ENCODE measurements at regions of chr19 and their contacts with region 1.

Region 1: DNA sequence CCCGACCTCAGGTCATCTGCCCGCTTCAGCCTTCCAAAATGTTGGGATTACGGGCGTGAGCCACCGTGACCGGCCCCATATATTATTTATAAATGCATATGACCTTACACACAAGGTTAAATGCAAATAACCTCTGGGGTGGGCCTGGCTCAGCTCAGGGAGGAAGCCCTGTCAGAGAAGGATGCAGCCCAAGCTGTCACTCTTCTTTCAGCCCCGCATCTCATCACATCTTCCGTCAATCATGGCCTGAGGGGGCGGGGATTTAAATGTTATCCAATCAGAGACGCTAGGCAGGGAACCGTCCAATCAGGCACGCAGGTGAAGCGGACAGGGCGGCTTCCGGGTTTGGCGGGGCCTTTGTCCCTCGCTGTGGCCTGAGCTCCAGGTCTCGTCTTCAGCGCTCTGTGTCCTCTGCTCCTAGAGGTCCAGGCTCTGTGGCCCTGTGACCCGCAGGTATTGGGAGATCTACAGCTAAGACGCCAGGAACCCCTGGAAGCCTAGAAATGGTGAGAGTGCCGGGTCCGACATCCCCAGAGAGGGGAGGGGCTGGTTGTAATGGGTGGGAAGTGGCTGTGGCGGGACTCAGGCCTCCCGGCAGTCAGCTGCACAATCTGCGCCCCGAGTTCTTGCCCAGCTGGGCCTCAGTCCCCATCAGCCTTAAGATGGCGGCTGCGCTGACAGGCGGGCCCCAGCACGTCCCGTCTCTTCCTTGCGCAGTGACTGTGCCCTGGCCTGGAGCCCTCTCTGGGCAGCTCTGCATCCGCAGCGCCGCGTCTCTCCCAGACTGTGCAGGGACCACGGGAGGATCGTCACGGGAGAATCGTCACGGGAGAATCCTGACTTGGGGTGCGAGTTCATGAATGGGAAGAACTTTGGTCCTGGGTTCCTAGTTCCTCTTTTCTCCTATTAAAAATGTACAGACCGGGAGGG is at the start of gene ZNF430:
- DNase-seq: peak; percentile 96
- H3K4me3 ChIP-seq: peak within 1 kb of the TSS; percentile 68 to 81 (median 69)
- H3K27ac ChIP-seq: peak within 1 kb of the TSS; percentile 85 to 91 (median 88)
- H3K4me1 ChIP-seq: peaks cover 0 to 14% (median 9%) of the 10 kb centered on the region in 4 donors
- H3K27me3 ChIP-seq: no peaks in the 10 kb centered on the region
- CTCF ChIP-seq: no peak
- EP300 ChIP-seq: no peak
- POLR2A ChIP-seq: peak; percentile 21 to 52
- total RNA-seq, gene ZNF430: 6.7 to 36.2 (median 13.6) TPM

Region 2: DNA sequence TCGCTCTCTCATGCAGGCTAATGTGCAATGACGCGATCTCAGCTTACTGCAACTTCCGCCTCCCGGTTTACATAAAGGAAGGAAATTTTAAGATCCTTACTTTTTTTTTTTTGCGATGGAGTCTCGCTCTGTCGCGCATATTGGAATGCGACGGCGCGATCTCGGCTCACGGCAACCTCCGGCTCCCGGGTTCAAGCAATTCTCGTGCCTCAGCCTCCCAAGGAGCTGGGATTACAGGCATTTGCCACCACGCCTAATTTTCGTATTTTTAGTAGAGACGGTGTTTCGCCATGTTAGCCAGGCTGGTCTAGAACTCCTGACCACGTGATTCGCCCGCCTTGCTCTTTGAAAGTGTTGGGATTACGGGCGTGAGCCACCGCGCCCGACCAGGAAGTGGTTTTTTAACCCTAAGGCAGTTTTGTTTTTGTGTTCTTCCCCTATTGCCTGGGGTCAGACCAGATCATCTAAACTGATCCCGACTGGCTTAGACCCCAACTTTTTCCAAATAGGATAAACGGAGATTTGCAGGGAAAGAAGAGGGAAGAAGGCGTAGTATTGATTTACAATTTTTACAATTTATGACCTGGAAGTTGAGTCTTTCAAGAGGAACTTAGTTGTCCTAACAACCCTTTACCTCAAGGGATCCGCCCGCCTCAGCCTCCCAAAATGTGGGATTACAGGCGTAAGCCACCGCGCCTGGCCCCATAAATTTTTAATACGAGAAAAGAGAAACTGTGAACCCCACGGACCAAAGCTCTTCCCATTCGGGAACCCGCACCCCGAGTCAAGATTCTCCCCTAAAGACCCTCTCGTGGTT is 597.0 kb before region 1 on chr19:
- intact Hi-C with region 1: loop called (anchors 10 kb)
- DNase-seq: peak; percentile 83
- H3K4me3 ChIP-seq: peak overlapping the region; percentile 57 to 69 (median 63)
- H3K27ac ChIP-seq: peak overlapping the region; percentile 84 to 90 (median 88)
- H3K4me1 ChIP-seq: peaks cover 0 to 13% (median 2%) of the 10 kb centered on the region in 4 donors
- H3K27me3 ChIP-seq: no peaks in the 10 kb centered on the region
- CTCF ChIP-seq: no peak
- EP300 ChIP-seq: no peak
- POLR2A ChIP-seq: no peak

Region 3: GRCh38 chr19:20565321-20566018 is 455.1 kb before region 1 on chr19 and contains the start of gene ZNF737:
- intact Hi-C with region 1: loop called (anchors 10 kb)
- DNase-seq: peak; percentile 98
- H3K4me3 ChIP-seq: peak within 1 kb of the TSS; percentile 55 to 83 (median 64)
- H3K27ac ChIP-seq: peak within 1 kb of the TSS; percentile 82 to 95 (median 88)
- H3K4me1 ChIP-seq: peaks cover 0 to 26% (median 14%) of the 10 kb centered on the region in 4 donors
- H3K27me3 ChIP-seq: no peaks in the 10 kb centered on the region
- CTCF ChIP-seq: peak in 3 of 4 experiments; percentile 18 to 42 (median 41)
- EP300 ChIP-seq: no peak
- POLR2A ChIP-seq: peak; percentile 50 to 73
- total RNA-seq, gene ZNF737: 9.5 to 17.7 (median 11.2) TPM

Region 4: DNA sequence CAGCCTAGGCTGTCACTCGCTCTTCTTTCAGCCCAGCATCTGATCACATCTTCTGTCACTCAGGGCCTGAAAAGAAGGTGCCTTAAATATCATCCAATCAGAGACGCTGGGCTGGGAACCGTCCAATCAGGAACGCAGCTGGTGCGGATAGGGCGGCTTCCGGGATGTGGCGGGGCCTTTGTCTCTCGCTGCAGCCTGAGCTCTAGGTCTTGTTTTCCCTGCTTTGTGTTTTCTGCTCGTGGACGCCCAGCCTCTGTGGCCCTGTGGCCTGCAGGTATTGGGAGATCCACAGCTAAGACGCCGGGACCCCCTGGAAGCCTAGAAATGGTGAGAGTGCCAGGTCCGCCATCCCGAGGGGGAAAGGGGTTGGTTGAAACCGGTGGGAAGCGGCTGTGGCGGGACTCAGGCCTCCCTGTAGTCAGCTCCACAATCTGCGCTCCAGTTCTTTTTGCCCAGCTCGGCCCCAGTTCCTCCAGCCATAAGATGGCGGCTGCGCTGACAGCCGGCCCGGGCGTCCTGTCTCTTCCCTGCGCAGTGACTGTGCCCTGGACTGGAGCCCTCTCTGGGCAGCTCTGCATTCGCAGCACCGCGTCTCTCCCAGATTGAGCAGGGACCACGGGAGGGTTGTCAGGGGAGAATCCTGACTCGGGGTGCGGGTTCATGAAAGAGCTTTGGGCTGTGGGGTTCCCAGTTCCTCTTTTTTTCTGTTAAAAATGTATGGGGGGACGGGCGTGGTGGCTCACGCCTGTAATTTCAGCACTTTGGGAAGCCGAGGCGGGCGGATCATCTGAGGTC is 97.3 kb before region 1 on chr19 and contains the start of gene ZNF85:
- intact Hi-C with region 1: loop called (anchors 5 kb)
- DNase-seq: peak; percentile 94
- H3K4me3 ChIP-seq: peak within 1 kb of the TSS; percentile 38 to 69 (median 62)
- H3K27ac ChIP-seq: peak within 1 kb of the TSS; percentile 81 to 92 (median 87)
- H3K4me1 ChIP-seq: peaks cover 0 to 7% (median 2%) of the 10 kb centered on the region in 4 donors
- H3K27me3 ChIP-seq: no peaks in the 10 kb centered on the region
- CTCF ChIP-seq: no peak
- EP300 ChIP-seq: no peak
- POLR2A ChIP-seq: no peak
- total RNA-seq, gene ZNF85: 3.6 to 6.1 (median 4.1) TPM

Region 5: GRCh38 chr19:20999731-21000352 is 20.7 kb before region 1 on chr19:
- intact Hi-C with region 1: no loop called
- DNase-seq: peak; percentile 91
- H3K4me3 ChIP-seq: peak overlapping the region; percentile 5 to 51 (median 44)
- H3K27ac ChIP-seq: no peak overlapping the region
- H3K4me1 ChIP-seq: peaks cover 0 to 5% (median 3%) of the 10 kb centered on the region in 4 donors
- H3K27me3 ChIP-seq: no peaks in the 10 kb centered on the region
- CTCF ChIP-seq: no peak
- EP300 ChIP-seq: no peak
- POLR2A ChIP-seq: no peak

Region 6: DNA sequence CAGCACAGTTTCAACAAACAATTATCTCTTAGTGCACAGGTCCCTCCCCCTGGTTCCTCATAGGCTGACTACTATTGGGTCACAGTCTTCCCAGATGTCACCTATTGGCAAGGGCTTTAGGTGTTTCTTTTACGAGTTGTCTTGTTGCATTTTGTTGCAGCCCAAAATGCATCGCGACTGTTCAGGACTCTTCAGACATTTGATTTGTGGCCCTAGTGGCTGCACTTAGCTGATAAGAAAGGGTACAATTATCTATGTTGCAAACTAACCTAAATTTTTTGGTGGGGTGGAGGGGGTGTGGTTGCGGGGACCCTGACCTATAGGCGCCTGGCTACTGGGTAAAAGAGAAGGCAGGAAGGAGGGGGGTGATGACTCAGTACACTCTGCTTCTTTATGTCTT is 32.3 kb after region 1 on chr19:
- intact Hi-C with region 1: no loop called
- DNase-seq: no peak
- H3K4me3 ChIP-seq: no peak overlapping the region
- H3K27ac ChIP-seq: no peak overlapping the region
- H3K4me1 ChIP-seq: no peaks in the 10 kb centered on the region
- H3K27me3 ChIP-seq: no peaks in the 10 kb centered on the region
- CTCF ChIP-seq: no peak
- EP300 ChIP-seq: no peak
- POLR2A ChIP-seq: no peak

Region 7: GRCh38 chr19:21082011-21082975 is 61.7 kb after region 1 on chr19 and contains the start of gene ZNF714:
- intact Hi-C with region 1: loop called (anchors 5 kb)
- DNase-seq: peak; percentile 90
- H3K4me3 ChIP-seq: peak within 1 kb of the TSS; percentile 29 to 72 (median 59)
- H3K27ac ChIP-seq: peak within 1 kb of the TSS; percentile 32 to 82 (median 77)
- H3K4me1 ChIP-seq: peaks cover 0 to 19% (median 3%) of the 10 kb centered on the region in 4 donors
- H3K27me3 ChIP-seq: no peaks in the 10 kb centered on the region
- CTCF ChIP-seq: no peak
- EP300 ChIP-seq: no peak
- POLR2A ChIP-seq: peak; percentile 43 to 51
- total RNA-seq, gene ZNF714: 3.1 to 6.6 (median 5.9) TPM

Region 8: GRCh38 chr19:21141787-21142464 is 121.4 kb after region 1 on chr19 and contains the start of gene ZNF431:
- intact Hi-C with region 1: loop called (anchors 5 kb)
- DNase-seq: peak; percentile 96
- H3K4me3 ChIP-seq: peak within 1 kb of the TSS; percentile 50 to 82 (median 72)
- H3K27ac ChIP-seq: peak within 1 kb of the TSS; percentile 66 to 91 (median 88)
- H3K4me1 ChIP-seq: peaks cover 0 to 17% (median 10%) of the 10 kb centered on the region in 4 donors
- H3K27me3 ChIP-seq: no peaks in the 10 kb centered on the region
- CTCF ChIP-seq: no peak
- EP300 ChIP-seq: no peak
- POLR2A ChIP-seq: peak; percentile 21 to 54
- total RNA-seq, gene ZNF431: 6.4 to 18.6 (median 12.2) TPM

Measured in sigmoid colon (tissue), 7 donors.